Heart left ventricle (tissue), 16 donors: ENCODE measurements at regions of chr3 and their contacts with region 1.

Region 1: GRCh38 chr3:163132111-163132510 is 1635.5 kb downstream of the OTOL1 start:
- DNase-seq: no peak
- ATAC-seq: no peak
- H3K4me3 ChIP-seq: no peak overlapping the region
- H3K27ac ChIP-seq: no peak overlapping the region
- H3K4me1 ChIP-seq: no peaks in the 10 kb centered on the region
- H3K27me3 ChIP-seq: no peaks in the 10 kb centered on the region
- CTCF ChIP-seq: no peak
- POLR2A ChIP-seq: no peak

Region 2: GRCh38 chr3:162729686-162730085 is 402.4 kb before region 1 on chr3:
- intact Hi-C with region 1: no loop called
- DNase-seq: no peak
- ATAC-seq: no peak
- H3K4me3 ChIP-seq: no peak overlapping the region
- H3K27ac ChIP-seq: no peak overlapping the region
- H3K4me1 ChIP-seq: no peaks in the 10 kb centered on the region
- H3K27me3 ChIP-seq: no peaks in the 10 kb centered on the region
- CTCF ChIP-seq: no peak
- POLR2A ChIP-seq: no peak

Region 3: GRCh38 chr3:163185721-163186350 is 53.7 kb after region 1 on chr3:
- intact Hi-C with region 1: loop called in 1 of 10 experiments (anchors 10 kb)
- DNase-seq: no peak
- ATAC-seq: no peak
- H3K4me3 ChIP-seq: no peak overlapping the region
- H3K27ac ChIP-seq: no peak overlapping the region
- H3K4me1 ChIP-seq: no peaks in the 10 kb centered on the region
- H3K27me3 ChIP-seq: no peaks in the 10 kb centered on the region
- CTCF ChIP-seq: no peak
- POLR2A ChIP-seq: no peak